CD4-positive, alpha-beta memory T cell (primary cell): ENCODE measurements at regions of chr12 and their contacts with region 1.

Region 1: GRCh38 chr12:62581288-62582064 is 114.8 kb downstream of the MON2 start:
- DNase-seq: peak in 4 of 5 donors; percentile 34 to 49 (median 38)
- H3K4me3 ChIP-seq: no peak overlapping the region
- H3K4me3 Mint-ChIP-seq: no peak overlapping the region
- H3K27ac ChIP-seq: no peak overlapping the region
- H3K27ac Mint-ChIP-seq: no peak overlapping the region
- H3K4me1 ChIP-seq: no peaks in the 10 kb centered on the region
- H3K4me1 Mint-ChIP-seq: peaks cover 0 to 2% (median 0%) of the 10 kb centered on the region in 4 donors
- H3K27me3 ChIP-seq: no peaks in the 10 kb centered on the region
- H3K27me3 Mint-ChIP-seq: no peaks in the 10 kb centered on the region

Region 2: DNA sequence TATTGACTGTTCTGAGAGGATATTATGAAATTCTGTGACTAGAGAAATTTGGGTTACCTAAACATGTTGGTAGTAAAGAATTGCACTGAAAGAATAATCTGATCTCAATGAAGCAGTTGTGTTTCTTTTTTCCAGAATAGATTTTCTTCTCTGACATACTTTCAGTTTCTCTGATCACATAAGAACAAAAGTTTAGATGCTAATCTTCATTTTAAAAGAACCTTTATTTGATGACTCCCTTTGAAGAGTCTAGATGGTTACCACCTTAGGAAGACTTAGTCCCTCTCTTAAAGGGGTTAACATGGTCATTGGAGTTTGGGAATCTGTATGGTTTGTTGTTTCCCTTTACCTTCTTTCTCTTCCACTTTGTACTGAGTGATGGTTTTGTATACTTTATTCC is 56.2 kb before region 1 on chr12:
- CTCF ChIA-PET with region 1: no interaction called
- POLR2A ChIA-PET with region 1: no interaction called
- intact Hi-C with region 1: no loop called
- DNase-seq: peak in 1 of 5 donors; percentile 3
- H3K4me3 ChIP-seq: no peak overlapping the region
- H3K4me3 Mint-ChIP-seq: peak overlapping the region in 3 of 8 donors; percentile 31 to 78 (median 53)
- H3K27ac ChIP-seq: no peak overlapping the region
- H3K27ac Mint-ChIP-seq: peak overlapping the region in 6 of 7 donors; percentile 54 to 81 (median 68)
- H3K4me1 ChIP-seq: peaks cover 25% of the 10 kb centered on the region
- H3K4me1 Mint-ChIP-seq: peaks cover 18 to 37% (median 24%) of the 10 kb centered on the region in 4 donors
- H3K27me3 ChIP-seq: no peaks in the 10 kb centered on the region
- H3K27me3 Mint-ChIP-seq: no peaks in the 10 kb centered on the region

Region 3: GRCh38 chr12:62562846-62563245 is 18.6 kb before region 1 on chr12:
- CTCF ChIA-PET with region 1: interaction called, 11 read pairs
- POLR2A ChIA-PET with region 1: no interaction called
- intact Hi-C with region 1: no loop called
- DNase-seq: no peak
- H3K4me3 ChIP-seq: no peak overlapping the region
- H3K4me3 Mint-ChIP-seq: no peak overlapping the region
- H3K27ac ChIP-seq: no peak overlapping the region
- H3K27ac Mint-ChIP-seq: peak overlapping the region in 1 of 7 donors; percentile 64
- H3K4me1 ChIP-seq: no peaks in the 10 kb centered on the region
- H3K4me1 Mint-ChIP-seq: peaks cover 0 to 2% (median under 1%) of the 10 kb centered on the region in 4 donors
- H3K27me3 ChIP-seq: no peaks in the 10 kb centered on the region
- H3K27me3 Mint-ChIP-seq: no peaks in the 10 kb centered on the region

Region 4: GRCh38 chr12:62679608-62680007 is 98.1 kb after region 1 on chr12:
- CTCF ChIA-PET with region 1: no interaction called
- POLR2A ChIA-PET with region 1: no interaction called
- intact Hi-C with region 1: no loop called
- DNase-seq: no peak
- H3K4me3 ChIP-seq: no peak overlapping the region
- H3K4me3 Mint-ChIP-seq: no peak overlapping the region
- H3K27ac ChIP-seq: no peak overlapping the region
- H3K27ac Mint-ChIP-seq: no peak overlapping the region
- H3K4me1 ChIP-seq: no peaks in the 10 kb centered on the region
- H3K4me1 Mint-ChIP-seq: peaks cover 0 to 1% (median 0%) of the 10 kb centered on the region in 4 donors
- H3K27me3 ChIP-seq: no peaks in the 10 kb centered on the region
- H3K27me3 Mint-ChIP-seq: peaks cover 3 to 9% of the 10 kb centered on the region in 2 donors